ENCODE measurements at regions of chr7 and their contacts with region 1.

Region 1: DNA sequence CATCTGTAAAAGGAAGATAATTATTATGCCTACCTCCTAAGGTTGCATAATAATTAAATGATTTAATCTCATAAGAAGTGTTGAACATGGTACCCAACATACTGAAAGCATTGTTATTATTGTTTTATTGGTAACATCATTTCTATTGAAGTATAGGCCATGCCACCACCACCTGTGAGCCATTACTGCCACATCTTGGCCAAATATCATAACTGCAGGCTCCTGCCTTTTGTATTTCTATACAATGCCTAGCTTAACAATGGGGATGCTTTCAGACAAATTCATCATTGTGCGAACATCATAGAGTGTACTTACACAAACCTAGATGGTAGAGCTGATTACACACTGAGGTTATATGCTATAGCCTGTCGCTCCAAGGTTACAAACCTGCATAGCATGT is 61.1 kb upstream of the NPSR1 start:
- DNase-seq: peak; percentile 7
- ATAC-seq: no peak
- H3K4me3 Mint-ChIP-seq: no peak overlapping the region
- H3K27ac Mint-ChIP-seq: no peak overlapping the region
- H3K4me1 Mint-ChIP-seq: no peaks in the 10 kb centered on the region
- H3K27me3 Mint-ChIP-seq: no peaks in the 10 kb centered on the region

Region 2: GRCh38 chr7:33841705-33842129 is 755.2 kb before region 1 on chr7:
- CTCF ChIA-PET with region 1: no interaction called
- POLR2A ChIA-PET with region 1: no interaction called
- intact Hi-C with region 1: no loop called
- DNase-seq: no peak
- ATAC-seq: no peak
- H3K4me3 Mint-ChIP-seq: no peak overlapping the region
- H3K27ac Mint-ChIP-seq: no peak overlapping the region
- H3K4me1 Mint-ChIP-seq: no peaks in the 10 kb centered on the region
- H3K27me3 Mint-ChIP-seq: peaks cover 2% of the 10 kb centered on the region

Region 3: DNA sequence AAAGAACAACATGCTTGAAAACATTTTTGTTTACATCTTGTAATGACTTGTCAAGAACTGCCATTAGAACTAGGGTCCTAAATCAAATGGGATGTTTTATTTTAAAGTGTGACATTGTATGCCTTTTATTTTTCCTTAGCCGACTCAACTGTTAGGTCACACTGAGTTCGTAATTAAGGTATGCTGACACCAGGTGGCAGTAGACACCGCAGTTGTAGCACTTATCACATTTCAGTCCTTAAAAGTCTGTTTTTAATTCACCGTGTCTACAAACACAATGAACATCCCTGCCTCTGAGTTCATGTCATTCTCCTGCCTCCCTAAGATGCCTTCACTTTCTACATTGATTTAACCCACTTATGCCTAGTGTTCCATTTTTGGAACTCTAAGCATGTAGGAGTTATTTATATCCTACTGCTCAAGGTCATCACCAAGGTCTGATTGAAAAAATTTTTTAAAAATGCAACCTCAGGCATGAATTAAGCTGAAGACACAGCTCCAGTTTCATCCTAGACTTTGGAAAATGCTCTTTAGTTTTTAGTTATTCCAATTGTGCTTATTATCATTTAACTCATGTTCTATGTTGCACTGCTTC is 505.5 kb before region 1 on chr7:
- CTCF ChIA-PET with region 1: no interaction called
- POLR2A ChIA-PET with region 1: no interaction called
- intact Hi-C with region 1: loop called in 1 of 2 experiments (anchors 10 kb)
- DNase-seq: peak; percentile 41
- ATAC-seq: peak; percentile 44
- H3K4me3 Mint-ChIP-seq: no peak overlapping the region
- H3K27ac Mint-ChIP-seq: no peak overlapping the region
- H3K4me1 Mint-ChIP-seq: no peaks in the 10 kb centered on the region
- H3K27me3 Mint-ChIP-seq: no peaks in the 10 kb centered on the region